Activated naive CD4-positive, alpha-beta T cell treated with anti-CD3 and anti-CD28 coated beads for 36 hours (primary cell): ENCODE measurements at regions of chr1 and their contacts with region 1.

Region 1: DNA sequence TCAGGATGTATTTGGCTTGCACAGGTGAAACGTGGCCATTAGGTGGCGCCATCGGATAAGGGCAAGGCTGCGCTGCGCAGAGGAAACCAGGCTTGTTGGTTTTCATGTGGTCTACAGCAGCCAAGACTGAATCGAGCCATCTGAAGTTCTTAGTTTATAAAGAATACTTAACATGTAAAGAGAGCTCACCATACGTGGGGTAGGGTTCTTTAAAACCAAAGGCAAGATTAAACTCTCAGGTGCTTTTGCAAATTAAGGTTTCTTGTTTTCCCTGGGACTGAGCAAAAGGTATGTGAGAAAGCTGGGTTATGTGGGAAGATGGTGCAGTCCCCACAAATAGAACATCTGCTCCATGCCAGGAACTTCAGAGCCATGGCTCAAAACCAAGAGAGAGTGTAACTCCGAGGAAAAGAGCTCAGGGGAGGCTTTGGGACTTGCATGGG is 9.3 kb downstream of the MASP2 start:
- DNase-seq: peak; percentile 94
- H3K4me3 Mint-ChIP-seq: no peak overlapping the region
- H3K27ac Mint-ChIP-seq: no peak overlapping the region
- H3K4me1 Mint-ChIP-seq: peaks cover 6% of the 10 kb centered on the region
- H3K27me3 Mint-ChIP-seq: no peaks in the 10 kb centered on the region

Region 2: GRCh38 chr1:10996100-10996499 is 41.7 kb before region 1 on chr1:
- CTCF ChIA-PET with region 1: no interaction called
- intact Hi-C with region 1: no loop called
- DNase-seq: no peak
- H3K4me3 Mint-ChIP-seq: no peak overlapping the region
- H3K27ac Mint-ChIP-seq: no peak overlapping the region
- H3K4me1 Mint-ChIP-seq: no peaks in the 10 kb centered on the region
- H3K27me3 Mint-ChIP-seq: no peaks in the 10 kb centered on the region

Region 3: DNA sequence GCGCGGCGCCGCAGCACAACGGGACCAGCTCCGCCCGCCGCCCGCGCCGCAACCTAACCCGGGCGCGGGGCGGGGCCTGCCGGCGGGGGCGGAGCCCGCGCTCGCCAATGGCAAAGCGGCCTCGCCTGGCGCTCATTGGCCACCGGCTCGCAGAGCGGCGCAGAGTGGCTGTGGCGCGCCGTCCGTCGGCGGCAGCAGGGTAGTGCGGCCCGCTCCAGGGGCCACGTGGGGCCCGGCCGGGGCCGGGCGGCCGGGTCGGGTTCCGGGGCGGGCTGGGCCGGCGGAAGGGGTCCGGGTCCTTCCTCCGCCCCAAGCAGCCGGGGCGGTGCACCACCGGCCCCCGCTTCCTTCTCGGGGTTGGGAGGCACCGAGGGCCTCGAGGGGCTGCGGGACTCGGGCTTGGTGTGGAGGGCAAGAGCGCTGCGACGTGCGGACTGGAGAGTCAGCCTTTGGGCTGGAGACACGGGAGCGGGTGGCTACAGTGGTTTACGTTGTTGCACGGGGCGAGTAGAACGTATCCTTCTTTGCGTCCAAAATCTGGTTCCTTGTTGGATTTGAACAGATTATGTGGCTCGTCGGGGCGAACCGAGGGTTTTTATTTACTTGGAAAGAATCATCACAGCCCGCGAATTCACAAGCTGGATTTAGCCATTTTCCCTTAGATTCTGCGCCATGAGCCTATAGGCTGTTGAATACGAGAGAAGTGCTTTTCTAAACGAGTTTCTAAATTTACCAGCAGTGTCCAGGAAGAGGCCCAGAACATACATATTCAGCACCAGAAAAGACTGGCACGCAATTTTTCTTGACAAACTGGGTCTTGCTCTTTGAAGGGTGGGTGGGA is 22.4 kb after region 1 on chr1 and contains the start of gene SRM:
- CTCF ChIA-PET with region 1: interaction called, 20 read pairs
- intact Hi-C with region 1: loop called (anchors 1 kb)
- DNase-seq: peak; percentile 89
- H3K4me3 Mint-ChIP-seq: peak within 1 kb of the TSS; percentile 95
- H3K27ac Mint-ChIP-seq: peak within 1 kb of the TSS; percentile 82
- H3K4me1 Mint-ChIP-seq: peaks cover 45% of the 10 kb centered on the region
- H3K27me3 Mint-ChIP-seq: no peaks in the 10 kb centered on the region
- total RNA-seq, gene SRM: 207 to 222 TPM

Region 4: DNA sequence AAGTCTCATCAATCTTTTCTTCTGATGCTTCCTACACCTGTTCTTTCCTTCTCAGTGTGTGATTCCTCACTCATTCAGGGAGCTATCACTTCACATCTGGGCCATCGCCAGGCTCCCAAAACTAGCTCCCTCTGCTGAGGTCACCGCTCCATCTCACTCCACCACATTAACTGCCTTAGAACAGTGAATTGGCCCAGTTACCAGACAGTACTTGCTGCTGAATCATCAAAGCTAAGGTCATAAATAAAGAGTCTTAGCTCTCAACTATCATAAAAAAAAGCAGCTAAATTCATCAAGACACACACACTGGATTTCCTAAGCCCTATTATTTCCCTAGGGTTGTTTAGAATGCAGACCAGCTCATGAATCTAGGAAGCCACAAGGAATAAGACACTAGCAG is 40.9 kb after region 1 on chr1:
- CTCF ChIA-PET with region 1: interaction called, 25 read pairs
- intact Hi-C with region 1: no loop called
- DNase-seq: no peak
- H3K4me3 Mint-ChIP-seq: no peak overlapping the region
- H3K27ac Mint-ChIP-seq: peak overlapping the region; percentile 22
- H3K4me1 Mint-ChIP-seq: peaks cover 5% of the 10 kb centered on the region
- H3K27me3 Mint-ChIP-seq: no peaks in the 10 kb centered on the region

Region 5: GRCh38 chr1:11109047-11109760 is 71.4 kb after region 1 on chr1:
- CTCF ChIA-PET with region 1: interaction called, 11 read pairs
- intact Hi-C with region 1: no loop called
- DNase-seq: no peak
- H3K4me3 Mint-ChIP-seq: no peak overlapping the region
- H3K27ac Mint-ChIP-seq: no peak overlapping the region
- H3K4me1 Mint-ChIP-seq: no peaks in the 10 kb centered on the region
- H3K27me3 Mint-ChIP-seq: no peaks in the 10 kb centered on the region